ENCODE measurements at regions of chr5 and their contacts with region 1.

Region 1: DNA sequence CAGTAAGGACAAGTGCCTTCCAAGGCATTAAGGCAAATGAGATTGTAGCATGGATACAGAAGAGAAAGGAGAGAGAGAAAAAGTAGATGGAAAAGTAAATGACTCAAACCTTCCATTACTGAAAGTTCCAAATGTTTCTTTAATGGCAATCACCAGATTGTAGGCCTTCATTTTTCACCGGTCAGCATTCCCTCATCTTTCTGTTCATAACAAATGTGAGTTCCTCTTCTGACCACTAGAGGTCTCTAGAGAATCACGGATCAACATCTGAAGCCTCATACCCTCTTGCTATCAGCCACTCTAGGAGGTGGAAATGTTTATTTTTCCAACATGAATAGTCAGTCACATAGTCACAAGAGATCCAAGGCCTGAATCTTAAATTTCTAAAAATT is 73.6 kb upstream of the RPS23 start:
- DNase-seq: no peak
- ATAC-seq: peak; percentile 54

Region 2: GRCh38 chr5:81909677-81910076 is 442.1 kb before region 1 on chr5:
- intact Hi-C with region 1: no loop called
- DNase-seq: no peak
- ATAC-seq: no peak

Region 3: DNA sequence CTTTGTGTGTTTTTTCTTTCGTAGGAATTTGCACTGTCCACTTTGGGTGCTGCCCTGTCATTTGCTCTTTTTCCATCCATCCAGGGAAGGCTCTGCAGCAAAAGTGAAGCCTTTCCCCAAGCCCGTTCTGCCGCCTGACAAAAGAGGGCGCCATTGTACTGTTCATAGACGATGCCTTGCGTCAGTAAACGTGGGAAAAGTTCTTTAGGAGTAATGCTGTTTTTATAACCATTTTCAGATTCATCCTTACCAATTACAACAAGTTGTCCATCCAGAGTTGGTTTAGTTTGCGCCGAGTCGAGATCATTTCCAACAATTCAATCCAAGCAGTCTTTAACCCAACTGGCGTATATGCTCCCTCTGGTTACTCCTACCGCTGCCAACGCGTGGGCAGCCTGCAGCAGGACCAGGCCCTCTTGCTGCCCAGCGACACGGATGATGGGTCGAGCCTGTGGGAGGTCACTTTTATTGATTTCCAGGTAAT is 39.3 kb before region 1 on chr5:
- intact Hi-C with region 1: loop called (anchors 5 kb)
- DNase-seq: no peak
- ATAC-seq: peak; percentile 86

Region 4: GRCh38 chr5:82364497-82364896 is 12.7 kb after region 1 on chr5:
- intact Hi-C with region 1: no loop called
- DNase-seq: no peak
- ATAC-seq: no peak

Region 5: GRCh38 chr5:82641331-82642003 is 289.7 kb after region 1 on chr5:
- intact Hi-C with region 1: loop called (anchors 1 kb)
- DNase-seq: no peak
- ATAC-seq: peak; percentile 91

Region 6: GRCh38 chr5:82793808-82794419 is 442.2 kb after region 1 on chr5:
- intact Hi-C with region 1: loop called (anchors 2 kb)
- DNase-seq: no peak
- ATAC-seq: no peak

Region 7: GRCh38 chr5:83473346-83474163 is 1121.8 kb after region 1 on chr5:
- intact Hi-C with region 1: loop called (anchors 5 kb)
- DNase-seq: peak; percentile 92
- ATAC-seq: peak; percentile 83

Region 8: DNA sequence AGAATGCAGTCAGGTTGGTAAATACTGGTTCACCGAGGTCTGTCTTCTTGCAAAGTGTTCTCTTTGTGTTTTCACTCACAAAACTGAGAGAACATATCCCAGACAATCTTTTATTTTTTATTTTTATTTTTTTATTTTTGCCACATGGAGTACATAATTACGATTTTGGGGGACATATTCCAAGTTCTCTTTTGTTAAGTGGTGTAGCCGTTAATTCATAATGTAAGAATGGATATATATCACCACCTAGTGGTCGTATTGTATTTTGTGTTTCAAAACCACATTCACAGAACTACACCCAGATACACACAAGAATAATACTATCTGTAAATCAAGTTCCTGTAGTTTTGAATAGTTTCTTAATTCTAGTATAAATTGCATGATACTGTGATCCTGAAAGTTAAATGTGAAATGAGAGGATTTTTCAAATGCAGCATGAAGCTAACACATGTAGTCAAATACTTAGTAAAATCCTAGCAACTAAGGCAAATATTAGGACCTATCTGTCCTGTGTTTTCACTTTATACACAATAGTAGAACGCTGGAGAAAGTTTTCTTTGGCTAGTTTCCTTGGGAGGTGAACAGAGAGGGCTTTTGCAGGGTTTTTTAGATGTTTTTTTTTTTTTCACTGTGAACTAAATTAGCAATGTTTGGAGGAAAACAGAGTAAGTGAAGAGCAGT is 1212.5 kb after region 1 on chr5:
- intact Hi-C with region 1: loop called (anchors 1 kb)
- DNase-seq: no peak
- ATAC-seq: peak; percentile 47

Measured in Right ventricle myocardium inferior (tissue), 1 donor.